ENCODE measurements at regions of chr5 and their contacts with region 1.

Region 1: GRCh38 chr5:112707187-112708102 is 30.2 kb upstream of the APC start:
- DNase-seq: peak; percentile 98
- ATAC-seq: peak; percentile 97
- H3K4me3 Mint-ChIP-seq: peak overlapping the region; percentile 83
- H3K27ac Mint-ChIP-seq: peak overlapping the region; percentile 90
- H3K4me1 Mint-ChIP-seq: peaks cover 54% of the 10 kb centered on the region
- H3K27me3 Mint-ChIP-seq: no peaks in the 10 kb centered on the region

Region 2: DNA sequence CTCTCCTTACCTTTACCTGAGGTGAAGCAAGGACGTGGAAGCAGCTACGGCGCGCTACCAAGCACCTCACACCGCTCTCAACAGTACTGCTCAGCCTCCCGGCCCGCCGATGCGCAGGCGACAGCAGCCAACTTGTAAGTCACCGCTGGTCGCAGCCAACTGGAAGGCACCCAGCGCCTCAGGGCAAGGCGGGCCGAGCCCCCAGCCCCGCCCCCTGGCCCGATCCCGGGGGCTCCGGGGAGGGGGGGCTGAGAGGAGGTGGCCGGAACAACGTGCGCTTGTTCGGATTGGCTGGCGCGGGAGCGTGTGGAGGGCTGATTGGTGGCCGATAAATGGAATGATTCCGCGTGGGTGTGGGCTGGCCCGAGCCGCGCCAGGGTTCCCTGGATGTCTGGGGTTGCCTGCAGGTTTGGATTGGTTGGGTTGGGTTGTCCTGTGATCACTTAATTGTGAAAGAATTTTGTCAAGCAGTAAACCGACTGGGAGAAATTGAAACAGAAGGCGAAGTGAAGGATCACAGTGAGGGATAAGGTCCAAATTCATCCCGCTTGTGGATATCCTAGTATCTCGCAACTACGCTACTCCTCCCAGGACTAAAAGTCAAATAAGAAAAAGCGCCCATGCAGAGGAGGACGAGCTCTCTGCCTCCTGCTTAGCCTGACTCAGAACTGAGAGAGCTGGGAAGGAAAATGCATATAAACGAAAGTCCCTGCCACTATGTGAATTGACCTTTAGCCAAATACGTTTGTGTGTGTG is 1194.9 kb before region 1 on chr5 and contains the start of gene STARD4:
- CTCF ChIA-PET with region 1: no interaction called
- POLR2A ChIA-PET with region 1: no interaction called
- intact Hi-C with region 1: loop called in 1 of 2 experiments (anchors 5 kb)
- DNase-seq: peak; percentile 97
- ATAC-seq: peak; percentile 94
- H3K4me3 Mint-ChIP-seq: peak within 1 kb of the TSS; percentile 99
- H3K27ac Mint-ChIP-seq: peak within 1 kb of the TSS; percentile 96
- H3K4me1 Mint-ChIP-seq: peaks cover 42% of the 10 kb centered on the region
- H3K27me3 Mint-ChIP-seq: no peaks in the 10 kb centered on the region
- total RNA-seq, gene STARD4: 54.2 to 55.3 TPM

Region 3: DNA sequence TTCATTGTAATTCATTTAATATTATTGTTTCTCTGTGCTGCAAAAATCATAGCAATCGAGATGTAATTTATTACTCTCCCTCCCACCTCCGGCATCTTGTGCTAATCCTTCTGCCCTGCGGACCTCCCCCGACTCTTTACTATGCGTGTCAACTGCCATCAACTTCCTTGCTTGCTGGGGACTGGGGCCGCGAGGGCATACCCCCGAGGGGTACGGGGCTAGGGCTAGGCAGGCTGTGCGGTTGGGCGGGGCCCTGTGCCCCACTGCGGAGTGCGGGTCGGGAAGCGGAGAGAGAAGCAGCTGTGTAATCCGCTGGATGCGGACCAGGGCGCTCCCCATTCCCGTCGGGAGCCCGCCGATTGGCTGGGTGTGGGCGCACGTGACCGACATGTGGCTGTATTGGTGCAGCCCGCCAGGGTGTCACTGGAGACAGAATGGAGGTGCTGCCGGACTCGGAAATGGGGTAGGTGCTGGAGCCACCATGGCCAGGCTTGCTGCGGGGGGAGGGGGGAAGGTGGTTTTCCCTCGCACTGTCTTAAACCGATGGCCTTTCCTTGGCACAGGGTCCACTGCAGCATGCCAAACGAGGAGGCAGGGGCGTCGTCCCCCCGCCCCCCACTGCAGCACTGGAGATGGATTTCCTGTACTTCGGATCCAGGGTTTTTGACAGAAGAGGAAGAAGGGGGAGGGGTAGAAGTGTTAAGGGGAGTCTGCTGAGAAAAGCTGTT is 30.2 kb after region 1 on chr5 and contains the start of gene APC:
- CTCF ChIA-PET with region 1: interaction called, 9 read pairs
- POLR2A ChIA-PET with region 1: interaction called, 4 read pairs
- intact Hi-C with region 1: loop called (anchors 1 kb)
- DNase-seq: peak; percentile 92
- ATAC-seq: peak; percentile 99
- H3K4me3 Mint-ChIP-seq: peak within 1 kb of the TSS; percentile 93
- H3K27ac Mint-ChIP-seq: peak within 1 kb of the TSS; percentile 83
- H3K4me1 Mint-ChIP-seq: peaks cover 16% of the 10 kb centered on the region
- H3K27me3 Mint-ChIP-seq: no peaks in the 10 kb centered on the region
- total RNA-seq, gene APC: 20.1 to 22.3 TPM

Region 4: DNA sequence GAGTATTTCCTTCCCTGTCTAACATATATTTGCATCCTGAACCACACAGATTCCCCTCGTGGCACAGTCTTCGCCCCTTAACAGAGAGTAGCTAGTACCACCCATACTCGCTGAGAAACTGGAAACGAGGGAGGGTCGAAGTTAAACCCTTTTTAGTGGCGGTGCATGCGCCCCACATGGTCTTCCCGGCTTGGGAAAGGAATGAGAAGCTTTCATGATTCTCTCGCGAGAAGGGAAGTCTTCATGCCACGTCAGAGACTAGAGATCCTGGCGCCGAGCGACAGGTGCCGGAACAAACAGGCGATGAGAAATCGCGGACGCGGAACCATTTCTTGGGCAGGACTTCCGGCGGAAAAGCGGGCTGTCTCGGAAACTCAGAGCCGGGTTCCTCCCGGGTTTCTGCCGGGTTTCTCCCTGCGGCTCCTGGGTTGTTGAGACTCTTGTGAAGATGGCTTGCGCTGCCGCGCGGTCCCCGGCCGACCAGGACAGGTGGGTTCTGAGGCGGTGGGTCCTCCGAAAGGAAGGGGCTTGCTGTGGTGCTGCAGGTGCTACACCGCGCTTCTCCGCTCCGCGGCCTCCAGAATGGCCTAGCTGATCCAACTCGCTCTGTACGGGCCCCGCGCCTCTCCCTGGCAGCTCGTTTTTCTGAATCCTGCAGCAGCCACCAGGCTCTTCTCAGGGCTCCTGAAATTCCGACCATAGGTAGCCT is 153.6 kb after region 1 on chr5 and contains the start of gene SRP19:
- CTCF ChIA-PET with region 1: no interaction called
- POLR2A ChIA-PET with region 1: interaction called, 4 read pairs
- intact Hi-C with region 1: loop called (anchors 1 kb)
- DNase-seq: peak; percentile 95
- ATAC-seq: peak; percentile 95
- H3K4me3 Mint-ChIP-seq: peak within 1 kb of the TSS; percentile 97
- H3K27ac Mint-ChIP-seq: peak within 1 kb of the TSS; percentile 98
- H3K4me1 Mint-ChIP-seq: peaks cover 32% of the 10 kb centered on the region
- H3K27me3 Mint-ChIP-seq: peaks cover 9% of the 10 kb centered on the region
- total RNA-seq, gene SRP19: 47.6 to 49.4 TPM

Region 5: DNA sequence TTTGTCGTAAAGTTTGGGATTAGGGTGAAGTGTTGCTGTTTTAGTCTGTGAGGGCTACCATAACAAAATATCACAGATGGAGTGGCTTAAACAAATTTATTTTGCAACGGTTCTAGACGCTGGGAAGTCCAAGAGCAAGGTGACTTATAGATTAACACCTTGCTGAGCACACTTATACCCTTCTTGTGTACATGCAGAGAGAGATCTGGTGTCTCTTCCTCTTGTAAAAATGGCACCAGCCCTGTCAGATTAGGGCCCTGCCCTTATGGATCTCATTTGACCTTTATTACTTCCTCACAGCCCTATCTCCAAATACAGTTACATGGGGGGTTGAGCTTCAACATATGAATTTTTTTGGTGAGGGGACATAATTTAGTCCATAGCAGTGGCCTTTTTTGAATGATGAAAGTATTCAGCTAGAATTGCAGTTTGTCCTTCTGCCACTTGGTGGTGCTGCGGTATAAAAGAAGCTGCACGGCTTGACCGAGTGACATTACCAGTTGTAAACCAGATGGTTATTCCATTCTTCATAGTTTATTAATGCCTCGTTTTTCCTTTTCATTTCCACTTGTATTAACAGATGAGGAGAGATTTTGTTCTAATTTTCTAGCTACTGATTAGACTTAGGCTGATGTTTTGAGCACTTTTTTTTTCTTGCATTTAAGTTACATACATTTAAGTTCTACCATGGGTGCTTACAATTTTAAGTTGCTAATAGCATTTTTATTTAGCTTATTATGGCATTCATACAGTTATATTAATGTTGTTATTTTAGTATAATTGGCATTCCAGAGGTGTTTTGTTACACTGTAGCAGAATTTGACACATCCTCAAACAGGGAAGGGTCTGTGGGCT is 288.5 kb after region 1 on chr5:
- CTCF ChIA-PET with region 1: no interaction called
- POLR2A ChIA-PET with region 1: interaction called, 10 read pairs
- intact Hi-C with region 1: no loop called
- DNase-seq: peak; percentile 84
- ATAC-seq: peak; percentile 71
- H3K4me3 Mint-ChIP-seq: no peak overlapping the region
- H3K27ac Mint-ChIP-seq: no peak overlapping the region
- H3K4me1 Mint-ChIP-seq: peaks cover 17% of the 10 kb centered on the region
- H3K27me3 Mint-ChIP-seq: no peaks in the 10 kb centered on the region